IMR-90 (cell line): ENCODE measurements at regions of chr11 and their contacts with region 1.

Region 1: DNA sequence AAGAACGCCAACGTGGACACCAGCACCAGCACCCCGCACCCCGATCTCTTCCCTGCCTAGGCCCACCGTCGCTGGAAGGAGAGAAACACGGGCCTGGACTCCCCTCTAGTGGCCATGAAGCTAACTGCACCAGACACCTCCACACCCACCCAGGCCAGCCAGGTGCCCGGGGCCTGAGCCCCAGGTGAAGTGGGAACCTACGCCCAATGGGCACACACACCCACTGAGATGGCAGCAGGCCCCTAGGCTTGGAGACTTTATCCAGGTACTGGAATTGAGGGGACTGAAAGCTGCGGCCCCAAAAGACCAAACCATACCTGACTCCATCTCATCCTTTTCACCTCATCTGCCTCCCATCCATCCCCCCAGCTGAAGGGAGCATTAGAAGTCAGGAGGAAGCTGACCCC is 81.0 kb downstream of the BUD13 start:
- DNase-seq: peak; percentile 6
- ATAC-seq: peak; percentile 87
- H3K4me3 ChIP-seq: no peak overlapping the region
- H3K27ac ChIP-seq: no peak overlapping the region
- H3K4me1 ChIP-seq: no peaks in the 10 kb centered on the region
- H3K27me3 ChIP-seq: peaks cover 18% of the 10 kb centered on the region
- CTCF ChIP-seq: peak; percentile 71
- POLR2A ChIP-seq: no peak
- RAD21 ChIP-seq: peak; percentile 84

Region 2: DNA sequence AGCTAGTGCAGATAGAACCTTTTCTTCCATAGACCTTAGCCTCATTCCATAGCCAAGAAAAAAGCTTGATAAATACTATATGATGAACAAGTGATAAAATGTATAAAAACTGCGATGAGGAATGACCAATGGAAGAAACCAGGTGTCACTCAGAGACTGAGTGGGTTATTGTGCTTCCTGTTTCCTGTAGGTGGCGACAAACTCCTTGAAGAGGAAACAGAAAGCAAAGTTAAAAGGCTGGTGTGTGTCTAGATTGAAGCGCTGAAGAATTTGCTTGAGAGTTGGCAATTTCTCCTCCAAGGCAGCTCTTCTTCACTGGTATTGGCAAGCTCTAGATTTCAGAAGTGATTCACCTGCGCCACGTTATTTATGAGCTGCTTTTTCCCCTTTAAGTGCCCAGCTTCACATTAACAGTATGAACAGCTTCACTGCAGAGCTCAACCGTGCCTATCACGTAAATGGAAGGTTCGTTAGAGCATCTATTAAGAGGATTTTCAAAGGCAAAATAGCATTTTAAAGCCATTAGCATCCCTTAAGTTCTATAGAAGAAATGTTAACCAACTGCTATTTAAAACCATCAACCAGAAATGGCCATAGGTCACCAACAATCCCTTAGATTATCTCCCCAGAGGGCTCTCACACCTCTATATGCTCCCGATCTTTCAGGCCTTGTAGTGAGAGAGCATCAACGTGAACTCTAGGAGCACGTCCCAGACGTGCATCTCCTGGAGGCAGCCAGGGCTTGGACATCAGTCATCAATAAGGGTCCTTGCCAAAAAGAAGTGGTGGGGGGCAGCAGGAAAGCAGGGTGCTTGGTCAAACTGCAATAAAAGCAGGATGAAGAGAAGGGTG is 1367.0 kb before region 1 on chr11:
- CTCF ChIA-PET with region 1: no interaction called
- POLR2A ChIA-PET with region 1: no interaction called
- dilution Hi-C with region 1: no loop called
- in situ Hi-C with region 1: loop called (anchors 25 kb)
- intact Hi-C with region 1: no loop called
- DNase-seq: peak; percentile 75
- ATAC-seq: peak; percentile 75
- H3K4me3 ChIP-seq: no peak overlapping the region
- H3K27ac ChIP-seq: no peak overlapping the region
- H3K4me1 ChIP-seq: peaks cover 2% of the 10 kb centered on the region; the same call in 1 of the 2 replicates
- H3K27me3 ChIP-seq: no peaks in the 10 kb centered on the region
- CTCF ChIP-seq: peak; percentile 83
- POLR2A ChIP-seq: no peak
- RAD21 ChIP-seq: peak; percentile 91

Region 3: DNA sequence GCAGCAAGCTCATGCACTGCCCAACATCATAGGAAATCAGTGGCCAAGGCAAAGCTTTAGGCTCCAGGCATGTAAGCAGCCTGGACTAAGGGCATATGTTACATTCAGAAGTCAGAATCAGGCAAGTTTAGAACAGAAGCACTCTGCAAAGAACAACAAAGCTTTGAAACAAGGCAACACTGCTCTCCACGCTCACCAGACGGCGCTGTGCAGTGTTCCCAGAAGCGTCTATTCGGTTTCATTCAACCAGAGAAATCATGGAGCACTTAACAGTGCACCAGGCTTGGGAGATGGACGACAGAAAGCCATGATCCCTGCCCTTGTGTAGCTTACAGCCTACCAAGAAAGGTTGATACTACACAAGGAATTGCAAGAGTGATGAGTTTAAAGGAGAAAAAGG is 474.8 kb before region 1 on chr11:
- CTCF ChIA-PET with region 1: interaction called, 6 read pairs
- POLR2A ChIA-PET with region 1: no interaction called
- dilution Hi-C with region 1: no loop called
- in situ Hi-C with region 1: loop called (anchors 10 kb)
- intact Hi-C with region 1: loop called (anchors 1 kb)
- DNase-seq: peak; percentile 45
- ATAC-seq: peak; percentile 88
- H3K4me3 ChIP-seq: no peak overlapping the region
- H3K27ac ChIP-seq: no peak overlapping the region
- H3K4me1 ChIP-seq: no peaks in the 10 kb centered on the region
- H3K27me3 ChIP-seq: no peaks in the 10 kb centered on the region
- CTCF ChIP-seq: peak; percentile 64
- POLR2A ChIP-seq: no peak
- RAD21 ChIP-seq: peak; percentile 44

Region 4: GRCh38 chr11:116454020-116454645 is 237.6 kb before region 1 on chr11:
- CTCF ChIA-PET with region 1: no interaction called
- POLR2A ChIA-PET with region 1: interaction called, 3 read pairs
- dilution Hi-C with region 1: no loop called
- in situ Hi-C with region 1: loop called (anchors 5 kb)
- intact Hi-C with region 1: loop called (anchors 1 kb)
- DNase-seq: peak; percentile 27
- ATAC-seq: peak; percentile 53; the same call in 1 of the 2 replicates
- H3K4me3 ChIP-seq: no peak overlapping the region
- H3K27ac ChIP-seq: no peak overlapping the region
- H3K4me1 ChIP-seq: no peaks in the 10 kb centered on the region
- H3K27me3 ChIP-seq: no peaks in the 10 kb centered on the region; the same call in 1 of the 2 replicates
- CTCF ChIP-seq: peak; percentile 50
- POLR2A ChIP-seq: no peak
- RAD21 ChIP-seq: peak; percentile 50

Region 5: DNA sequence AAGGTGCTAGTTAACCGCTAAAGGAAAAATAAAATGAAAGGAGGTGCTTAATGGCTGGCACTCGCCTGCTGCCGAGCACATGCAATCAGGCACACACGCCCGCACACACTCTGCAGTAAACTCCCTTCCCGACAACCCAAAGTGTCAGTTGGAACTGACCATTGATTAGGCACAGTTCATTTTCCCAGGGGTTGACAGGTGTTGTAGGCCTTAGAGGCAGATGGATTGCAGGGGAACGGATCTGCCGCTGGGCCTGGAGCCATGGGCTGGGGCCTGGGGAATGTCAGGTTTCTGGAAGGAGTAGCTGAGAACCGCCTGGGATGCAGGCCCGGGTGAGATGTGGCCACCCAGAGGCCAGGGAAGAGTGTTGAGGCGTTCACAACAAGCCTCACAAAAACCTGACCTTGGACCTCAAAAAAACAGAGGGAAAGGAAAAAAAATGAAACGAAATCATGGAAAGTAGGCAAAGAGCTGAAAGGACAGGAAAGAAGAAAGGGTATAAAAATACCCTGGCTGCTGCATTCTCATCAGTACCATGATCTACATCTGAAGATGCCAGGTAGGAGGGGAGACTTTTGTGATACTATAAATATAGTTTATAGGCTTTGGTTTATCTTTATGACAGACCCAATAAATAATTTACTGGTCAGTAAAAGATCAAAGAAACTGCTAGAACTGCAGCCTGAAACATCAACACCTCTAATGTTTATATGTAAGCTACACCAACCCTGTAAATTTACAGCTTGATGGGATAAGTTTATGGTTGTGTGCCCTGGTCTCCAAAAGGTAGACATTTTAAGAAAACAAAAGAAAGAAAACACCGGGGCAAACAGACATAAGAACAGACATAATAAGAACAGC is 232.4 kb before region 1 on chr11:
- CTCF ChIA-PET with region 1: no interaction called
- POLR2A ChIA-PET with region 1: interaction called, 3 read pairs
- dilution Hi-C with region 1: no loop called
- in situ Hi-C with region 1: loop called (anchors 5 kb)
- intact Hi-C with region 1: loop called (anchors 1 kb)
- DNase-seq: no peak
- ATAC-seq: no peak
- H3K4me3 ChIP-seq: no peak overlapping the region
- H3K27ac ChIP-seq: no peak overlapping the region
- H3K4me1 ChIP-seq: no peaks in the 10 kb centered on the region
- H3K27me3 ChIP-seq: no peaks in the 10 kb centered on the region; the same call in 1 of the 2 replicates
- CTCF ChIP-seq: no peak
- POLR2A ChIP-seq: no peak
- RAD21 ChIP-seq: no peak

Region 6: DNA sequence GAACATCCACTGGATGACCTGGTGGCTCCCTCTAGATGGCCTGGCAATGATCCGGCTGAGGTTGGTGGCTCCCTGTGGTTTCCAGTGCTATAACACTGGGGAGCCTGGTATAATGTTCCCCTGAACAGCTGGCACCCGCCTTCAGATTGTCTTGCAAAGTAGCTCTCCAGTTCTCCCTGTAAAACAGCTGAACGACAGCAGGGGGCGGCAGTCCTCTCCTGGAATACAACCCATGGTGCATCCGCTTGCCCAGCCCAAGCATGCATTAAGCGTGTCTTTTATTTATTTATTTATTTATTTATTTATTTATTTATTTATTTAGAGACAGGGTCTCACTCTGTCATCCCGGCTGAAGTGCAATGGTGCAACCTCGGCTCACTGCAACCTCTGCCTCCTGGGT is 177.9 kb before region 1 on chr11:
- CTCF ChIA-PET with region 1: no interaction called
- POLR2A ChIA-PET with region 1: no interaction called
- dilution Hi-C with region 1: no loop called
- in situ Hi-C with region 1: no loop called
- intact Hi-C with region 1: loop called (anchors 1 kb)
- DNase-seq: peak; percentile 28
- ATAC-seq: peak; percentile 35; the same call in 1 of the 2 replicates
- H3K4me3 ChIP-seq: no peak overlapping the region
- H3K27ac ChIP-seq: no peak overlapping the region
- H3K4me1 ChIP-seq: no peaks in the 10 kb centered on the region
- H3K27me3 ChIP-seq: no peaks in the 10 kb centered on the region
- CTCF ChIP-seq: peak; percentile 28; the same call in 1 of the 2 replicates
- POLR2A ChIP-seq: no peak
- RAD21 ChIP-seq: peak; percentile 17; the same call in 1 of the 2 replicates